Activated CD8-positive, alpha-beta T cell treated with anti-CD3 and anti-CD28 coated beads for 36 hours (primary cell): ENCODE measurements at regions of chr17 and their contacts with region 1.

Region 1: DNA sequence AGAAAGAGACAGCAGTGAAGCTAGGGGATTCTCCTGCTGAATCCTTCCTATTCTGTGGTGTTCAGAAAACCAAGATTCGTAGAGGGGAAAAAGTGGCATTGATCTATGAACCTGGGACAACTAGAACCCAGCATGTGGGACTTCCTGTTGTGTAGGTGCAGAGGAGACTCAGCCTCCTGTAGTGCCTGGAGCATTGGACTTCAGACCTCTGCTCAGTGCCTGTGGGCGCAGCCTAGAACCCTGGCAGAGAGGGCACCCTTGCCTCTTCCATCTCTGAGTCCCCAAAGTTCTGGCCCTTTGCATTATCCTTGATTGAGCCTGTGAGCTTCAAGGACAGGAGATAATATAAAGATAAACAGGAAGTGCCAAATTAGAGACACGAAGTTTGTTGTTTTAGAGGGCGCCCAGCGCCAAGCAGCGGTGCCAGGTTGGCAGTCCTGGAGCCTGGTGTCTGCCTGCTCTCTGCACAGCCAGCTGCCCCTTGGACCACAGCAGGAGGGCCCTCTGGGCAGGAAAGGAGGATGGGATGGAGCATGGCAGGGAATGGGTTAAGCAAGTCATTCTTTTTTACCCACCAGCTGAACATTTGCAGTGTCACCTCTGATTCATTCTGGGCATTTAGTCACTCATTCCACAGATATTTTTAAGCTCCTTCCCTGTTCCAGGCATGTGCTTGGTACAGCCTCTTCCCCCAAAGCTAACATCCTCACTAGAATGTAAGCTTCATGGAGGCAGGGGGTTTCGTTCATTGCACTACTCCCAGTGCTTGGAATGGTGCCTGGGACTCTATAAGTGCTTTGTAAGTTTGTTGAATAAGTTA is 11.9 kb upstream of the SP6 start:
- DNase-seq: no peak
- ATAC-seq: no peak
- H3K4me3 Mint-ChIP-seq: no peak overlapping the region
- H3K27ac Mint-ChIP-seq: no peak overlapping the region
- H3K4me1 Mint-ChIP-seq: peaks cover 12% of the 10 kb centered on the region
- H3K27me3 Mint-ChIP-seq: peaks cover 13% of the 10 kb centered on the region
- CTCF ChIP-seq: no peak

Region 2: GRCh38 chr17:47850692-47851573 is 11.9 kb before region 1 on chr17 and contains the start of gene SP6:
- CTCF ChIA-PET with region 1: interaction called, 24 read pairs
- POLR2A ChIA-PET with region 1: no interaction called
- intact Hi-C with region 1: no loop called
- DNase-seq: peak; percentile 83
- ATAC-seq: peak; percentile 93
- H3K4me3 Mint-ChIP-seq: peak within 1 kb of the TSS; percentile 32
- H3K27ac Mint-ChIP-seq: no peak within 1 kb of the TSS
- H3K4me1 Mint-ChIP-seq: peaks cover 16% of the 10 kb centered on the region
- H3K27me3 Mint-ChIP-seq: peaks cover 76% of the 10 kb centered on the region
- CTCF ChIP-seq: no peak
- total RNA-seq, gene SP6: 0.13 to 0.18 TPM